ENCODE measurements at regions of chr14 and their contacts with region 1.

Region 1: GRCh38 chr14:23588884-23589598 is 10.5 kb upstream of the JPH4 start:
- DNase-seq: peak; percentile 84
- ATAC-seq: peak; percentile 100
- H3K4me3 ChIP-seq: no peak overlapping the region
- H3K27ac ChIP-seq: no peak overlapping the region
- H3K4me1 ChIP-seq: no peaks in the 10 kb centered on the region
- H3K27me3 ChIP-seq: no peaks in the 10 kb centered on the region
- CTCF ChIP-seq: peak; percentile 87
- POLR2A ChIP-seq: no peak
- RAD21 ChIP-seq: peak; percentile 78

Region 2: GRCh38 chr14:23409966-23410635 is 178.9 kb before region 1 on chr14:
- CTCF ChIA-PET with region 1: no interaction called
- POLR2A ChIA-PET with region 1: no interaction called
- dilution Hi-C with region 1: no loop called
- in situ Hi-C with region 1: no loop called
- intact Hi-C with region 1: no loop called
- DNase-seq: no peak
- ATAC-seq: no peak
- H3K4me3 ChIP-seq: no peak overlapping the region
- H3K27ac ChIP-seq: no peak overlapping the region
- H3K4me1 ChIP-seq: no peaks in the 10 kb centered on the region
- H3K27me3 ChIP-seq: peaks cover 42% of the 10 kb centered on the region
- CTCF ChIP-seq: no peak
- POLR2A ChIP-seq: no peak
- RAD21 ChIP-seq: no peak

Region 3: DNA sequence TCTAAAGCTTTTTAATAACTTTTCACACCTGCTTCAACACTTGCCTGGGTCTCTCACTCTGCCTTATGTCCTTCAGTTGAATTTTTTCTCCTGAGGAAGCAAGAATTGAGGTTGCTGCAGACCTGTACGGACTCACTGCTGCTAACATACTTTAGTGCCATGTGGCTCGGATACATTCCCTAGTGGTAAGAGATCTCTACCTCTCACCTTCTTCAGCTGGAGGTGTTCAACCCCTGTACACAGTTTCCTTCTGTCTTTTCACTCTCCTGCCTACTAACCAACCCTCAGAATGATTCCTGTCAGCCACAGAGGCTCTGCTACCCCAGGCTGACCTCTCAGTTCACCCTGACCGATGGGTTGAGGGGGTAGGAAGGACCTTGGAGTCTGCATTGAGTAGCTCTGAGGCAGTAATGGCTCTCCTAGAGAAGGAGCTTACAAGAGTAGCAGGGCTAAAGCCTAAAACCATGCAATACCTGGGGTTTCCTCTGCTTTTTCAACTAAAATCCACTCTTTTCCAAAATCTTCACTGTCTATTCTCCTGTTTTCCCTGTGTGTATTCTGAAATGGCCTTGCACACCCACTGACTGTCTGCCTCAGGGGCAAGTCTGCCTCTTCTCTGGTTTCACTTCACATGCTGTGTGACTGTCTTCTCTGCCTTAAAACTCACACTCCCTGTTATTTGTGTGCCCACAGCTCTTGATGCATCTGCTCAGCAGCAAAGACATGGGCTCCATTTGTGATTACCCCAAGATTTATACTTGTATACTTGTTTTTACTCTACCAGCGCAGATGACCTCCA is 33.1 kb after region 1 on chr14:
- CTCF ChIA-PET with region 1: no interaction called
- POLR2A ChIA-PET with region 1: no interaction called
- dilution Hi-C with region 1: no loop called
- in situ Hi-C with region 1: no loop called
- intact Hi-C with region 1: loop called (anchors 2 kb)
- DNase-seq: no peak
- ATAC-seq: no peak
- H3K4me3 ChIP-seq: no peak overlapping the region
- H3K27ac ChIP-seq: no peak overlapping the region
- H3K4me1 ChIP-seq: no peaks in the 10 kb centered on the region
- H3K27me3 ChIP-seq: 0 out of 2 replicates have a peak, but pooled peaks cover 2% of the 10 kb centered on the region
- CTCF ChIP-seq: no peak
- POLR2A ChIP-seq: no peak
- RAD21 ChIP-seq: no peak

Region 4: DNA sequence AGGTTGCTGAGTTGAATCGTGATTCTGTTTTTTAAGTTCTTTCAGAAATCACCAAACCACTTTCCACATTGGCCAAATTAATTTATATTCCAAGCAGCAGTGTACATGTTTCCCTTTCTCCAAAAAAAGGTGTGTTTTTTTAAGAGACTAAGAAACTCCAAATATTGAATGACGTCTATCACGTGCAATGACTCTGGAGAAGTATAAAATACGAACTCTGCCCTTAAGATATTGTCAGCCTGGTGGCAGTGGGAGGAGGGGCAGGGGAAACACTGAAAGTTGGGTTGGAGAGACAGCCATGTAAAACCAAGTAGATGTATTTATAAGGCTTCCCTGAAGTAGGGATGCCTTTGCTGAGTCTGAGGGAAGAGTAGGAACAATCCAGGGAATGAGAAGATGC is 314.4 kb after region 1 on chr14:
- CTCF ChIA-PET with region 1: no interaction called
- POLR2A ChIA-PET with region 1: interaction called, 23 read pairs
- dilution Hi-C with region 1: no loop called
- in situ Hi-C with region 1: no loop called
- intact Hi-C with region 1: no loop called
- DNase-seq: no peak
- ATAC-seq: no peak
- H3K4me3 ChIP-seq: no peak overlapping the region
- H3K27ac ChIP-seq: no peak overlapping the region
- H3K4me1 ChIP-seq: no peaks in the 10 kb centered on the region
- H3K27me3 ChIP-seq: no peaks in the 10 kb centered on the region; the same call in 1 of the 2 replicates
- CTCF ChIP-seq: no peak
- POLR2A ChIP-seq: no peak
- RAD21 ChIP-seq: no peak

Region 5: DNA sequence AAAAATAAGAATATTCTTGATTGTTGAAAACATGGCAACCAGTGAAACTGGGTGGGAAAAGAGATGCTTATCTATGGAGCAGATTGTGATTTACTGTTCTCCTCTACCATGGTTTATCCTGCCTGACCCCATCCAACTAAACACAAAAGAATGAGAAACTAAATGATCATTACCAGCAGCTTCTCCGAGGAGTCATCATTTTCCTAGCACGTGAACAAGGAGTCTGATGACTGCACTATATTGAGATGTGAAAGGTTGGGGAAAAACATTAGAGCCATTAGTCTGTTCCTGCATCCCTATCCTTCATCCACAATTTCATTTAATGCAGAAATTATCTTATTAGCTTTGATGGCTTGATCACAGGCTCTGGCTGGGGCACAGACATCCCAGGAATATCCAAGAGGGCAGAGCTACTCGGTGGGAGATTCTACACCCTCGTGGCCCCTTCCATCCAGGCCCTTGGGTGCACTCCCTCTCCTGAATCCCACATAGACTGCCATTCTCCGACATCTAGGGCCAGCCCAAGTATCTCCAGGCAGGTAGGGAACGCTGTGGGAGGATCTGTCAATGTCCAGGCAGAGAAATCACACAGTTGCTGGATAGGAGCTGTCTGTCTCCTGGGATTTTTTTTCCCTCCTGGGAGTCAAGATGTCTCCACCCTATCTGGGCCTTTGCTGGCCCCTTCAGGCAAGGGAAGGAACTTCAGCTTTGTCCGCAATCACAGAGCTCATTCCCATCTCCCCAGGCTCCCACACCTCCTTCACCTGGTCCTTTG is 321.2 kb after region 1 on chr14:
- CTCF ChIA-PET with region 1: interaction called, 10 read pairs
- POLR2A ChIA-PET with region 1: no interaction called
- dilution Hi-C with region 1: no loop called
- in situ Hi-C with region 1: no loop called
- intact Hi-C with region 1: loop called (anchors 1 kb)
- DNase-seq: peak; percentile 48
- ATAC-seq: peak; percentile 98
- H3K4me3 ChIP-seq: no peak overlapping the region
- H3K27ac ChIP-seq: no peak overlapping the region
- H3K4me1 ChIP-seq: no peaks in the 10 kb centered on the region
- H3K27me3 ChIP-seq: peaks cover 3% of the 10 kb centered on the region; the same call in 1 of the 2 replicates
- CTCF ChIP-seq: peak; percentile 81
- POLR2A ChIP-seq: no peak
- RAD21 ChIP-seq: peak; percentile 87

Region 6: GRCh38 chr14:23929822-23930294 is 340.8 kb after region 1 on chr14:
- CTCF ChIA-PET with region 1: no interaction called
- POLR2A ChIA-PET with region 1: no interaction called
- dilution Hi-C with region 1: no loop called
- in situ Hi-C with region 1: no loop called
- intact Hi-C with region 1: loop called (anchors 1 kb)
- DNase-seq: peak; percentile 69
- ATAC-seq: peak; percentile 99
- H3K4me3 ChIP-seq: no peak overlapping the region
- H3K27ac ChIP-seq: no peak overlapping the region
- H3K4me1 ChIP-seq: no peaks in the 10 kb centered on the region
- H3K27me3 ChIP-seq: peaks cover 4% of the 10 kb centered on the region; the same call in 1 of the 2 replicates
- CTCF ChIP-seq: peak; percentile 78
- POLR2A ChIP-seq: no peak
- RAD21 ChIP-seq: peak; percentile 69

Region 7: DNA sequence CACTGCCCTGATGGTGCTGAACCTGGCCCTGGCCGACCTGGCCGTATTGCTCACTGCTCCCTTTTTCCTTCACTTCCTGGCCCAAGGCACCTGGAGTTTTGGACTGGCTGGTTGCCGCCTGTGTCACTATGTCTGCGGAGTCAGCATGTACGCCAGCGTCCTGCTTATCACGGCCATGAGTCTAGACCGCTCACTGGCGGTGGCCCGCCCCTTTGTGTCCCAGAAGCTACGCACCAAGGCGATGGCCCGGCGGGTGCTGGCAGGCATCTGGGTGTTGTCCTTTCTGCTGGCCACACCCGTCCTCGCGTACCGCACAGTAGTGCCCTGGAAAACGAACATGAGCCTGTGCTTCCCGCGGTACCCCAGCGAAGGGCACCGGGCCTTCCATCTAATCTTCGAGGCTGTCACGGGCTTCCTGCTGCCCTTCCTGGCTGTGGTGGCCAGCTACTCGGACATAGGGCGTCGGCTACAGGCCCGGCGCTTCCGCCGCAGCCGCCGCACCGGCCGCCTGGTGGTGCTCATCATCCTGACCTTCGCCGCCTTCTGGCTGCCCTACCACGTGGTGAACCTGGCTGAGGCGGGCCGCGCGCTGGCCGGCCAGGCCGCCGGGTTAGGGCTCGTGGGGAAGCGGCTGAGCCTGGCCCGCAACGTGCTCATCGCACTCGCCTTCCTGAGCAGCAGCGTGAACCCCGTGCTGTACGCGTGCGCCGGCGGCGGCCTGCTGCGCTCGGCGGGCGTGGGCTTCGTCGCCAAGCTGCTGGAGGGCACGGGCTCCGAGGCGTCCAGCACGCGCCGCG is 727.0 kb after region 1 on chr14:
- CTCF ChIA-PET with region 1: no interaction called
- POLR2A ChIA-PET with region 1: no interaction called
- dilution Hi-C with region 1: no loop called
- in situ Hi-C with region 1: no loop called
- intact Hi-C with region 1: no loop called
- DNase-seq: no peak
- ATAC-seq: peak; percentile 28
- H3K4me3 ChIP-seq: no peak overlapping the region
- H3K27ac ChIP-seq: no peak overlapping the region
- H3K4me1 ChIP-seq: peaks cover 2% of the 10 kb centered on the region; the same call in 1 of the 2 replicates
- H3K27me3 ChIP-seq: peaks cover 37% of the 10 kb centered on the region
- CTCF ChIP-seq: peak; percentile 9; the same call in 1 of the 2 replicates
- POLR2A ChIP-seq: no peak
- RAD21 ChIP-seq: no peak

Measured in IMR-90 (cell line).